ENCODE measurements at regions of chr20 and their contacts with region 1.

Region 1: DNA sequence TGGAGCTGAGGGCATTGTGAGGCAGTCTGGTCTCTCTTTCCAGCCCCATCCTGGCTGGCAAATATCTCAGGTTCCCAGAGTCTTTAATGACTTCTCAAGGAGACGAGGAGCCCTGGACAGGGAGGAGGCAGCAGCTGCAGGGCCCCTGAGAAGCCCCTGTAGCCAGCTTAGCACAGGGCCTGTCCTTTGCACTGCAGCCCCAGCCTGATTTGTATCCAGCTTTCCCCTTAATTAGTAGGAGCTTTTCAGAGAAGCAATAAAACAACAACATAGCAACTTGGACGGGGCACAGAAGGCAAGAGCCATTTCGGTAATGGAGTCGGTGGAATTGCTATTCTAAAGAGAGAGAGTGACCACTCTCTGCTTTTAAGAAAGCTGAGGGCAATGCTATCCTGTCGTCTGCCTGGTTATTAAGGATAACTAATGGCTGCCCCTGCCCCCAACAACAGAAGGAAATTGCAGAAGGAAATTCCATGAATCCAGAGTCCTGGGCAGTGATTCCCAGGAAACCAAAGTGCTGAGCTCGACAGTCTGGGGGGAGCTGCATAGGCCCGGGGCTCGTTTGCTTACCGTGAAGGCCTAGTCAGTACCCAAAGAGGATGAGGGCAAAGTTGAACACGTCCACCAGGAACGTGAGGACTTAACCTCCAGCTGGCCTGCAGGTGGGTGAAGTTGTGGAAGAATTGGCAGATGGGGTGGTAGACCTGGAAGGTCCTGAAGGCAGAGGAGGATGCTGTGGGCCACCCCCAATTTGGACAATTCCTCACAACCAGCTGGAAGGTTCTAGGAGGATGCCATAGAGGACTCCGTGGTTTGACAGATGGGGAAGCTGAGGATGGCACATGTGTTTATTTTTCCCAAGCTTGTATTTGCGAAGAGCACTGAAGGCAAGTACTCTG is 50.3 kb downstream of the NPEPL1 start:
- DNase-seq: no peak
- ATAC-seq: no peak
- H3K4me3 ChIP-seq: no peak overlapping the region
- H3K27ac ChIP-seq: no peak overlapping the region
- H3K4me1 ChIP-seq: no peaks in the 10 kb centered on the region
- H3K27me3 ChIP-seq: peaks cover 4 to 30% of the 10 kb centered on the region in 2 experiments; a peak in 3 of 5 replicates
- CTCF ChIP-seq: no peak
- EP300 ChIP-seq: no peak
- POLR2A ChIP-seq: no peak
- RAD21 ChIP-seq: no peak

Region 2: DNA sequence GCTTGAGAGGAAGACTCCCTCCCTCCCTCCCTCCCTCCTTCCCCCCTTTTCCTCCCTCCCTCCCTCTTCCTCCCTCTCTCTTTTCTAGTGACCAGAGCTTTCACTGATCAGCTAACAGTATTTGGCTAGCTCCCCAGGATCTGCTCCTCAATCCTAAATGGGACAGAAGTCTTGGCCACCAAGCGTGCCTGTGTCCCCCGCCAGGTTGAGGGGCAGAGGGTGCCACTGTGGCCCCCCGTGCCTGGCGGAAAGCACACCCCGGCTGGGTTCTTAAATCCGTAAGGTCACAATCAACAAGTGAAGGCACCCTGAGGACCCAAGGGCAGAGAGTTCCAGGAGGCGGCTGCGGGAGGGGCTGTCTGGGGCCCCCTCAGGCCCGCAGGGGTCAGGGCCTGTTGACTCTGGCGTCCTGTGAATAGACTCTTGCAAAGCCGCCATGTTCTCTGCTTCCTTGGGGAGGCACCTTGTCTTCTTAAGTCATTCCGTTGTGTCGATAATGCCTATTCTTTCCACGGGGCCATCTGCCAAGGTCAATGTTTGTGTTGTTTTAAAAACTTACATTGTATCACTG is 130.7 kb before region 1 on chr20:
- CTCF ChIA-PET with region 1: no interaction called
- POLR2A ChIA-PET with region 1: no interaction called
- in situ Hi-C with region 1: no loop called
- intact Hi-C with region 1: no loop called
- DNase-seq: no peak
- ATAC-seq: no peak
- H3K4me3 ChIP-seq: no peak overlapping the region
- H3K27ac ChIP-seq: no peak overlapping the region
- H3K4me1 ChIP-seq: no peaks in the 10 kb centered on the region
- H3K27me3 ChIP-seq: peaks cover 50 to 95% of the 10 kb centered on the region in 2 experiments
- CTCF ChIP-seq: no peak
- EP300 ChIP-seq: no peak
- POLR2A ChIP-seq: no peak
- RAD21 ChIP-seq: no peak

Region 3: GRCh38 chr20:58753267-58753921 is 10.5 kb after region 1 on chr20:
- CTCF ChIA-PET with region 1: no interaction called
- POLR2A ChIA-PET with region 1: no interaction called
- in situ Hi-C with region 1: no loop called
- intact Hi-C with region 1: loop called (anchors 1 kb)
- DNase-seq: no peak
- ATAC-seq: no peak
- H3K4me3 ChIP-seq: no peak overlapping the region
- H3K27ac ChIP-seq: no peak overlapping the region
- H3K4me1 ChIP-seq: no peaks in the 10 kb centered on the region
- H3K27me3 ChIP-seq: peaks cover 15 to 80% of the 10 kb centered on the region in 2 experiments
- CTCF ChIP-seq: no peak
- EP300 ChIP-seq: no peak
- POLR2A ChIP-seq: no peak
- RAD21 ChIP-seq: no peak

Region 4: DNA sequence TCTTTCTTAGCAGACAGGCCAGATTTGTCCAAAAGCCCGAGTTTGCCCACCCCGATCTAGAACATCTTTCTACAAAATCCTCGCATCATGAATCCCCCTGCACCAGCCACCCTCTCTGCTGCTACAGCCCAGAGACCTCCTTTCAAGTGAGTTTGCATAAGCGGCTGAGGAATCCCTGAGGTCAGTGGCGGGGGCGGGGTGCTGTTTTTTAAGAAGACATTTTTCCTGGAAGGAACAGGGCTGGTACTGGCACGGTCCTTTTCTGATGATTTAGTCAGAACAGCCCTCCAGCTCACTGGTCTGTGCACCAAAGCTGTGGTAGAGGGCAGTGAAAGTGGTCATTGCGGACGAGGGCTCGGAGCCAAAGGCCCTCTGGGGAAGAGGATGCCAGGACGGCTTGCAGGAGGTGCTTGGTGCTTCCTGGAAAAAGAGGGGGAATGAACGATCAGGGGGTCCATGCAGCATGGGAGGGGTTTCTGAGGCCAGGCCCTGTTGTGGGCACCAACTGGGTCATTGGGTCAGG is 57.3 kb after region 1 on chr20:
- CTCF ChIA-PET with region 1: no interaction called
- POLR2A ChIA-PET with region 1: no interaction called
- in situ Hi-C with region 1: no loop called
- intact Hi-C with region 1: no loop called
- DNase-seq: no peak
- ATAC-seq: no peak
- H3K4me3 ChIP-seq: no peak overlapping the region
- H3K27ac ChIP-seq: no peak overlapping the region
- H3K4me1 ChIP-seq: no peaks in the 10 kb centered on the region
- H3K27me3 ChIP-seq: peaks cover 25 to 88% of the 10 kb centered on the region in 2 experiments
- CTCF ChIP-seq: no peak
- EP300 ChIP-seq: no peak
- POLR2A ChIP-seq: no peak
- RAD21 ChIP-seq: no peak